ENCODE measurements at regions of chr10 and their contacts with region 1.

Region 1: GRCh38 chr10:28652696-28653095 is 24.6 kb upstream of the BAMBI start:
- DNase-seq: no peak
- H3K4me3 ChIP-seq: no peak overlapping the region
- CTCF ChIP-seq: no peak
- POLR2A ChIP-seq: no peak

Region 2: DNA sequence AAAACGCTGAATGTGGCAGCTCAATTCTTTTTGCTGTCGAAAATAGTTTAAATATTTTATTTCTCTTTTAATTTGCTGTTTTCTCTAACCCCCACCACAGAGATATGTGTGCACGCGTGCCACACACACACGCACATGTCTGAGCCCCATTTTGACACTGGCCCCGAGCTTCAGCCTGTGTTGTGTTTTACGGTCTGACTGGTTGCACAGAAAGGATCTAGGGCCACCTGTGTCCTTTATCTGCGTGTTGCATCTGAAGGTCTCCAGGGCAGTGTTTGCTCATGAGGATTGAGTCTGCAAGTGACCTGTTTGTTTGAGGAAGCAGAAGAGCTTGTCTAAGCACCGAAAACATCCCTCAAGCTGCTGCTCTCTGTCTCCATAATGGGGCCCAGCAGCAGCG is 369.8 kb after region 1 on chr10:
- intact Hi-C with region 1: no loop called
- DNase-seq: no peak
- H3K4me3 ChIP-seq: no peak overlapping the region
- CTCF ChIP-seq: no peak
- POLR2A ChIP-seq: no peak

Region 3: DNA sequence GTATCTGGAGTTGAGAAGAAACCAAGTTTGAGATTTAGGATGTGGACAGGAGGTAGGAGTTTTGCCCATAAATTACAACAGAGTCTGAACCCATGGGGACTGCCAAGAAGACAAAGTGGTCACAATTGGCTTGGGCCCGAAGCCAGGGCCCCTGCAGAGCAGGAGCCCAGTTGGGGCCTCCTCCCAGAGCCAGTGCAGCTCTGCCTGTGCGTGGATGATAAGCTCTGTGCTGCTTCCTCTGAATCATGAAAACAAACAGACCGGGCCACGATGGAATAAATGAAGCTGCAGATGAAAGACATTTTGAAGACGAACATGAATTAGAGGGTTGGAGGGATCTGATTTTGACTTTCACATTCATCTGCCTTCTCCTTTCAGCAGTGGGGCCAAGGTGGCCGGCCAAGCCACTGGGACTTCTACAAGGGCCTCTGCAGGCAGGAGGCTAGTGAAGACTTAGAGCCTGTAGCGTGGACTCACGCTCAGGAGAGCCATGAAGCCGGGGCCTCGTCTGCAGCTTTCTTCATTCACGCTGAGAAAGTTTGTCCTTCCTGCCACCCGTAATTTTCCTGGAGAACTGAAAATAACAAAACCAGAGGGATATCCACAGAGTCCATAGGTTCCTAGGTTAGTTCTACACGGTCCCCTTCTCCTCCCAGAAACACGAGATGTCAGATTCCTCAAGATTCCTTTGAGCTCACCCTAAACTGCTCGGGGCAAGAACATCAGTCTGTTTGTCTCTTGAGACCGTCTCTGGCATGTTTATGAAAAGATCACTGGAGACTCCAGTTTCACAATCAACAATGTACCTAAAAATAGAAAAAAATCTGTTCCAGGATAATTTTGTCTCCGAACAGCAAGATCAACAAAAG is 479.5 kb after region 1 on chr10:
- intact Hi-C with region 1: loop called (anchors 10 kb)
- DNase-seq: no peak
- H3K4me3 ChIP-seq: no peak overlapping the region
- CTCF ChIP-seq: no peak
- POLR2A ChIP-seq: no peak